GM12878 (cell line): ENCODE measurements at regions of chr7 and their contacts with region 1.

Region 1: DNA sequence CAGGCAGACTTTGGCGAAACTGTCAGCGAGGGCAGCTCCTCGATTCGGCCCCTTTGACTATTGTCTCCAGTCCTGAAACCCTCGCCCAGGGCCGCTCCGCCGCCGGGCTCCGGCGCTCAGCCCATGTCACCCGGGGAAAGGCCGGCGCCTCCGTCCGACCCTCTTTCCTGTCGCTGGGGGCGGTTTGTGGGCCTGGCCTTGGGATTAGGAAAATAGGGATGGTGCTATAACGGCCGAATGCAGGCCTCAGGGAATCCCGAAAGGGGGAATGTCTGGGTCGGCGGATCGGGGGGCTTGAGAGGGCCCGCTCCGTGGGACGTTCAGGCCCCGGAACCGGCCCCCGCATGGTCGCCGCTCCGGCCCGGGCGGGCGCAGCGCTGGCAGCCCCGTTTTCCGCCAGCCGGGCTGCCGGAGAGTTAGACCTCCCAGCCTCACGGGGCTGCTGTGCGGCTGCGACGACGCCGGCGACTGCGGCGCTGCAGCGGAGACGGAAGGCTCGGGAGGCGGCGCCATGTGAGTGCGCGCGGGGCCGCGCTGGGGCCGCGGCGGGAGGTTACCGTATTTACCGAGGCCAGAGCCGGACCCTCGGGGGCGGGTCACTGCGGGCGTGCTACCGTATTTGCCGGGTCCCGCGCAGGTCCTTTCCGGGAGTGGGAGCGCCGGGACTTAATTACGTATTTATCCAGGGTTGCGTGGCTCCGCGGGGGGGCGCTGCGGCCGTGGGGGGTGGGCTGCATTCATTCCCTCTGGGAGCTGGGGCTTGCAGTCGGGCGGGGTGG is 25.9 kb downstream of the ZNF775 start:
- DNase-seq: no peak
- ATAC-seq: peak; percentile 62
- H3K4me3 ChIP-seq: peak overlapping the region; percentile 91
- H3K27ac ChIP-seq: peak overlapping the region; percentile 89
- H3K4me1 ChIP-seq: peaks cover 58% of the 10 kb centered on the region
- H3K27me3 ChIP-seq: no peaks in the 10 kb centered on the region
- CTCF ChIP-seq: peak; percentile 13 to 39 (median 19); a peak in 4 of 6 replicates
- EP300 ChIP-seq: peak in 1 of 2 experiments; percentile 53; a peak in 1 of 4 replicates
- POLR2A ChIP-seq: peak; percentile 94
- RAD21 ChIP-seq: no peak

Region 2: GRCh38 chr7:149385195-149385950 is 1019.6 kb before region 1 on chr7:
- CTCF ChIA-PET with region 1: no interaction called
- POLR2A ChIA-PET with region 1: no interaction called
- RAD21 ChIA-PET with region 1: no interaction called
- SMC1A ChIA-PET with region 1: no interaction called
- in situ Hi-C with region 1: no loop called
- intact Hi-C with region 1: no loop called
- DNase-seq: no peak
- ATAC-seq: no peak
- H3K4me3 ChIP-seq: no peak overlapping the region
- H3K27ac ChIP-seq: no peak overlapping the region
- H3K4me1 ChIP-seq: no peaks in the 10 kb centered on the region
- H3K27me3 ChIP-seq: no peaks in the 10 kb centered on the region; a peak in 2 of 4 replicates
- CTCF ChIP-seq: no peak
- EP300 ChIP-seq: no peak
- POLR2A ChIP-seq: no peak
- RAD21 ChIP-seq: no peak

Region 3: DNA sequence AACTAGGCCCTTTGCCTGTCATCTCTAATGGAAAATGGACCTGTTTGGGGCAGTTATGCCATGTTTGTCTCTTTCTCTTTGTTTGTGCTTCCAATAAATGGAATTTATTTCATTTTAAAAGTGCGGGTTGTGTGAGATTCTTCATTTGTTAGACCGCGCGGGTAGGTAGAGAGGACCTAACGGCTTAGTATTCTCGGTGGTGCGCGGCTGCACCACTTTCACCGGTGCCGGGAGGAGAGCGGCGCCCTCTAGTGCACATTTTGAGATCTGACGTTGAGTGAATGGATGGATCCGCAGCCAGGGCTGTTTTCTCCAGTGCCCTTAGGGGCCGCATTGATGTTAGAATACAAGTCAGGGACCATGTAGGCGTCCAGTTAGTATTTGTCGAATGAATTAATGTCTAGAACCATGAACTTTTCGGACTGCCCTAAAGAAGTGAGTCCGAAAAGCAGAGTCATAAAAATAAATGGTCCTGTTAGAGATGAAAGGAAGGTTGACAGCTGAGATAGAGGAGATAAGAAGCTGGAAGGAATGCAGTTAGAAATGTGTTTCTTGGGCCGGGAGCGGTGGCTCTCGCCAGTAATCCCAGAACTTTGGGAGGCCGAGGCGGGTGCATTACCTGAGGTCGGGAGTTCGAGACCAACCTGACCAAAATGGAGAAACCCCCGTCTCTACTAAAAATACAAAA is 16.1 kb after region 1 on chr7:
- CTCF ChIA-PET with region 1: interaction called, 26 read pairs
- POLR2A ChIA-PET with region 1: interaction called, 4 read pairs
- RAD21 ChIA-PET with region 1: interaction called, 5 read pairs
- SMC1A ChIA-PET with region 1: interaction called, 8 read pairs
- in situ Hi-C with region 1: no loop called
- intact Hi-C with region 1: no loop called
- DNase-seq: no peak
- ATAC-seq: peak; percentile 100
- H3K4me3 ChIP-seq: no peak overlapping the region
- H3K27ac ChIP-seq: no peak overlapping the region
- H3K4me1 ChIP-seq: peaks cover 2% of the 10 kb centered on the region; the same call in 1 of the 2 replicates
- H3K27me3 ChIP-seq: no peaks in the 10 kb centered on the region
- CTCF ChIP-seq: peak; percentile 86 to 95 (median 88); a peak in 5 of 6 replicates
- EP300 ChIP-seq: no peak
- POLR2A ChIP-seq: no peak
- RAD21 ChIP-seq: peak; percentile 94